Activated T-helper 1 cell treated with anti-CD3 and anti-CD28 coated beads, Interleukin-12 subunit alpha, Interleukin-12 subunit beta, Interleukin-2, Interleukin-4 antibody, amounts not matched to agents 30 ng/mL and 10 ng/mL and 1 ng/mL, durations not matched to agents 14 hours and 24 hours and 36 hours (primary cell): ENCODE measurements at regions of chr1 and their contacts with region 1.

Region 1: DNA sequence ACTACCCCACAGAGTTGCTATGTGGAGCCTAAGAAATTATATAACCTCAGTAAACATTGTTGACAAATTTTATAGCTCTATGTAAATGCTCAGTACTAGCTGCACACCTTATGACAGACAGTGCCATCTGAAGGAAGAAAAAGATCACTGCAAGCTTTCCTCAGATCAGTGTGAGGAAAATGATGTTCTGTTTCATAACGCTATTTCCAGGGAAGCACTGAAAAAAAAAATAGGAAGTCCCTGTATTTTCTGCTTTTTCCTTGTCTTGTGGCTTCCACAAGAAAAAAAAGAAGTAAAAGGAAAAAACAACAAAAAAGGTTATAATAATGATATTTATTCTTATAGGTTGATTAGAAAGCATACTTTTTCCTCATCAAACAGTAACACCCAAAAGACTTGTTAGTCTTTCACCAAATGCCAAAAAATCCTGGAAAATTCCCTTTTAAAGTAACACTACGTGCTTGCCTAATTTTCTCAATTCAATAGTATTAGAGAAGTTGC is 23.2 kb downstream of the LYST start:
- DNase-seq: no peak
- H3K4me3 Mint-ChIP-seq: no peak overlapping the region
- H3K27ac Mint-ChIP-seq: no peak overlapping the region
- H3K4me1 Mint-ChIP-seq: peaks cover 43% of the 10 kb centered on the region
- H3K27me3 Mint-ChIP-seq: no peaks in the 10 kb centered on the region

Region 2: GRCh38 chr1:234755449-234755863 is 1088.1 kb before region 1 on chr1:
- intact Hi-C with region 1: no loop called
- DNase-seq: no peak
- H3K4me3 Mint-ChIP-seq: no peak overlapping the region
- H3K27ac Mint-ChIP-seq: no peak overlapping the region
- H3K4me1 Mint-ChIP-seq: peaks cover 45% of the 10 kb centered on the region
- H3K27me3 Mint-ChIP-seq: peaks cover 10% of the 10 kb centered on the region

Region 3: DNA sequence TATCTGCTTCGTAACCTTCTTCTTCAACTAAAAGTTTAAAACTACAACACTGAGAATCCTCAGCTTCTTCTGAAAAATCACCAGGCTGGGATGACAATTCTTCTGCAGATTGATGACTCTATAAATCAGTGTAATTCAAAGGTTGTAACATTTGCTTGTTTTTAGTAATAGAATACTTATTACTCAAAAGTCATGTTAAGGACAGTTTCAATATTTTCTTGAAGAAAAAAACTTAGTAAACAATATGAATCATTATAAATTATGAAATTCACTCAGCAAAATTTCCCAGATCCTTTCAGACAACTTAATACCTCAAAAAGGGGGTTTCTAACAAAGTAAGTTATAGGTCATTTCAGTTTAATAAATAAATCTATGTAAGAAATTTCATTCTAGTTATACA is 40.6 kb before region 1 on chr1:
- intact Hi-C with region 1: loop called (anchors 5 kb)
- DNase-seq: no peak
- H3K4me3 Mint-ChIP-seq: no peak overlapping the region
- H3K27ac Mint-ChIP-seq: no peak overlapping the region
- H3K4me1 Mint-ChIP-seq: peaks cover 6% of the 10 kb centered on the region
- H3K27me3 Mint-ChIP-seq: no peaks in the 10 kb centered on the region